Left ventricle myocardium superior (tissue), 1 donor: ENCODE measurements at regions of chr1 and their contacts with region 1.

Region 1: DNA sequence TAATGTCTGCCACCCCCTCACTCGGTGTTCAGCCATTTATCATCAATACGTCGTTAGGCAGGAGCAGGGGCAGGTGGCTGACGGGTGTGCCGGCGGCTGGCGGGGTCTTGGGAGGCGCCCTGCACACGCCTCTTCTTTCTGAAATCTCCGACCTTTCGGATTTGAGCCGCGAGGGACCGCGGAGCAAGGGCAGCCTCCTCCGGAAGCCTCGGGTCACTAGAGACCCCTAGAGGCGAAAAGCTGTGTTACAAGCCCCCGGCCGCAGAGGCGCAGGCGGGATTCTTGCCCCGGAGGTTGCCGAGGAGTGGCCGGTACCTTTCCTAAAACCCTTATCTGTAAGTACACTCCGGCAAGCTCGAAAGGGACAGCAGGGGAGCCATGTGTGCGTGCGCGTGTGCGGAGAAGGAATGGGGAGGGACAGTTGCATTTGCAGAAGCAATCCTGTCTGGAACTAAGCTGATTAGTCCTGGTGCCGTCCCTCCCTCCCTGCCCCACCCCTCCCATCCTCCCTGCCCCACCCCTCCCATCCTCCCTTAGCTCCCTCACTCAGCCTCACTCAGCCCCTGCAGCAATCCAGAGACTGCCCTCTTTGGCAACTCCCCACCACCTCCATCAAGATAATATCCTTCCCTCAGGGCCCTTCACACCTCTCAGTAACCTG is 11.0 kb downstream of the BRINP2 start:
- DNase-seq: peak; percentile 66
- ATAC-seq: peak; percentile 92

Region 2: DNA sequence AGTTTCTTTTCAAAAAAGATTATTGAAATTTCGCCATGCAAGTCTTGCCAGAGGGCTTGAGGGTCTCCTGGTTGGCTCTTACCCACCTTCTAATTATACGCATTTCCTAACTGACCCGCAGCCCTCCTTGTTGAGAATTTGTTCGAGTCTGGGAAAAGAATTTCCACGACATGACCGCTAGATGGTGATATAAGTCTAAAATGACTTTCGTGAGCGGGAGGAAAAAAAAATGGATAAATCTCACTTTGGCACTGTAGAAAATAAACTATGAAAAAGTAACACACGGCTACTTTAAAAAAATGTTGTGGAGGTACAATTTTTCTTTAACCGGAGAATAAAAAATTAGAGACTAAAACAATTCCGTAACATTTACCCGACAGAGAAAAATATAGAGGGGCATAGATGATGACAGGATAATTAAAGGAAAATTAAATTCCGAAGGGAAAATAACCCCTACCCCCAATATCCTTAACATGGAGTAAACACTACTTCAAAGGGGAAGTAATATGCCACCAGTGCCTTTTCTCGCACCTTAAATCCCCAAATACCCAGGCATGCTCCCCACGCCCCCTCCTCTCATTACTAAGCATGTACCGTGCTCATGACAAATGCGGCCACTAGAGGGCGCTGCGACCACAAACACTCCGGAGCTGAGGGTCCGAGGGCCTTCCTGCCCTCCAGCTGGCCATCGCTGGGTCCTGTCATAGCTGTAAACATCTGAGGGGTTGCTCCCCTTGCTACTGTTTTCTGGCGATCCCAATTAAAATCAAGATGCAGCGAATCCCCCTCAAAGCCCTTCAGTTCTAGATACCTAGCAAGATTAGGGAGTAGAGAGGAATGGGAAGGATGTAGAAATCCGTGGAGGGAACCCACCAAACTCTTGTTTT is 284.2 kb before region 1 on chr1:
- intact Hi-C with region 1: loop called (anchors 5 kb)
- DNase-seq: peak; percentile 80
- ATAC-seq: peak; percentile 67

Region 3: GRCh38 chr1:177228700-177229080 is 46.9 kb after region 1 on chr1:
- intact Hi-C with region 1: no loop called
- DNase-seq: no peak
- ATAC-seq: no peak